Psoas muscle (tissue), 8 donors: ENCODE measurements at regions of chr12 and their contacts with region 1.

Region 1: GRCh38 chr12:98516184-98516873 is 939 bp downstream of the TMPO start:
- DNase-seq: peak; percentile 53 to 67
- ATAC-seq: peak; percentile 40 to 64 (median 54)
- H3K4me3 ChIP-seq: peak overlapping the region; percentile 96
- H3K27ac ChIP-seq: peak overlapping the region; percentile 88
- H3K4me1 ChIP-seq: peaks cover 16% of the 10 kb centered on the region
- H3K27me3 ChIP-seq: no peaks in the 10 kb centered on the region
- CTCF ChIP-seq: peak; percentile 64

Region 2: GRCh38 chr12:98424726-98425401 is 91.5 kb before region 1 on chr12:
- intact Hi-C with region 1: loop called (anchors 1 to 10 kb)
- DNase-seq: peak in 1 of 2 donors; percentile 56
- ATAC-seq: peak; percentile 57 to 75 (median 62)
- H3K4me3 ChIP-seq: no peak overlapping the region
- H3K27ac ChIP-seq: no peak overlapping the region
- H3K4me1 ChIP-seq: peaks cover 3% of the 10 kb centered on the region
- H3K27me3 ChIP-seq: no peaks in the 10 kb centered on the region
- CTCF ChIP-seq: peak; percentile 66

Region 3: GRCh38 chr12:98490501-98491453 is 25.6 kb before region 1 on chr12:
- intact Hi-C with region 1: loop called (anchors 1 to 2 kb)
- DNase-seq: peak; percentile 81 to 88
- ATAC-seq: peak; percentile 78 to 92 (median 84)
- H3K4me3 ChIP-seq: no peak overlapping the region
- H3K27ac ChIP-seq: no peak overlapping the region
- H3K4me1 ChIP-seq: no peaks in the 10 kb centered on the region
- H3K27me3 ChIP-seq: no peaks in the 10 kb centered on the region
- CTCF ChIP-seq: peak; percentile 83

Region 4: GRCh38 chr12:98532681-98533304 is 16.5 kb after region 1 on chr12:
- intact Hi-C with region 1: loop called in 1 of 2 experiments (anchors 2 kb)
- DNase-seq: no peak
- ATAC-seq: peak; percentile 59 to 79 (median 70)
- H3K4me3 ChIP-seq: peak overlapping the region; percentile 24
- H3K27ac ChIP-seq: peak overlapping the region; percentile 72
- H3K4me1 ChIP-seq: peaks cover 23% of the 10 kb centered on the region
- H3K27me3 ChIP-seq: no peaks in the 10 kb centered on the region
- CTCF ChIP-seq: peak; percentile 66